Ascending aorta (tissue), 2 donors: ENCODE measurements at regions of chr10 and their contacts with region 1.

Region 1: DNA sequence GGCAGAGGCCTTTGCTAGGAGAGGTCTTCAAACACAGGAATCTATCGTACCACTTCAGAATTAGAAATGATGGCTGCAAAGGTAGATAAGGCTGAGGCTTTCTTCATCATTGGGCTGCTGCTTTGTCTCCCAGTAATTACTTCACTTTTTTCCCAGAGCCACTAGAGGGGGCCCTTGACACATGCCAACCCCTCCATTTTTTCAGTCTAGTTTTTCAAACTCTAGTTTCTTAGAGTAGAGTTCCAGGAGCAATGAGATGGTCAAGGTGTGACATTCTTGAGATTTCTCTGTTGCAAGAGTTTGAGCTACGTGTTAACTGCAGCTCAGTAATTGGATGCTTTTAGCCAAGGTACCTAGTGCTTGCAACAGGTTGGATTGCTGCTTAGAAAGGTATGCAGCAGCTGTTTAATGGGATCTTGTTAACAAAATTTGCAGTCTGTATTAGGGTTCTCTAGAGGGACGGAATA is 33.8 kb upstream of the RBM20 start:
- DNase-seq: no peak
- H3K4me3 ChIP-seq: no peak overlapping the region
- H3K27ac ChIP-seq: peak overlapping the region in 1 of 2 donors; percentile 40
- H3K4me1 ChIP-seq: no peaks in the 10 kb centered on the region
- H3K27me3 ChIP-seq: no peaks in the 10 kb centered on the region
- CTCF ChIP-seq: peak; percentile 65 to 88 (median 76)

Region 2: DNA sequence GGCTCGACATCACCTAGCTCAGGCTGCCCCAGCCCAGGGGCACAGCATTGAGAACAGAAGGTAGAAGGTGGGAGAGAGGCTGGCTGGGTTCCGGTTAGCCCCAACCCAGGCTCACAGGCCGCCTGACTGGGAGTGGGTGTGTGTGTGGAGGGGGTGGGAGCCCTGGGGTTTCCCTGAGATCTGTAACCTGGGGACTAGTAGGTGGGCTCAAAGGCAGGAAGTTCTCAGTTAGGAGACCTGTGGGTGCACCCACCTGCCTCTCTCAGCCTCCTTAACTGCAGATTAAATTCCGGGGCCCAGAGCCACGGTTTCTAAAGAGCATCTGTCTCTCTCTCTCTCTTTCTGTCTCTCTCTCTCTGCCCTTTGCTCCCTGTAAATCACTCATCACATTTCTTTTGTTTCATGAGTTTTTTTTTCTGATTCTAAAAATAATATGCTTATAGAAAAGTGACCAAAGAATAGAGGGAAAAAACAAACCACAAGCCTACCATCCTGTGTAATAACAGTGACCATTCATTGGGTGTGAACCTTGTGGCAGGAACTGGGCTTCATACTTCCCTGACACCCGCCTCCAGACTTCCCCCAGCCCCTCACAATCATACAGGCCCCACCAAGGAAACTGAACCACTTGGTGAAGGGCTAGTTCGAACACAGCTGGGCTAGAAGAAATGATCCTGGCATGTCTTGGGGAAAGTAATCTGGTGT is 222.2 kb before region 1 on chr10:
- intact Hi-C with region 1: no loop called
- DNase-seq: no peak
- H3K4me3 ChIP-seq: no peak overlapping the region
- H3K27ac ChIP-seq: no peak overlapping the region
- H3K4me1 ChIP-seq: no peaks in the 10 kb centered on the region
- H3K27me3 ChIP-seq: no peaks in the 10 kb centered on the region
- CTCF ChIP-seq: no peak

Region 3: DNA sequence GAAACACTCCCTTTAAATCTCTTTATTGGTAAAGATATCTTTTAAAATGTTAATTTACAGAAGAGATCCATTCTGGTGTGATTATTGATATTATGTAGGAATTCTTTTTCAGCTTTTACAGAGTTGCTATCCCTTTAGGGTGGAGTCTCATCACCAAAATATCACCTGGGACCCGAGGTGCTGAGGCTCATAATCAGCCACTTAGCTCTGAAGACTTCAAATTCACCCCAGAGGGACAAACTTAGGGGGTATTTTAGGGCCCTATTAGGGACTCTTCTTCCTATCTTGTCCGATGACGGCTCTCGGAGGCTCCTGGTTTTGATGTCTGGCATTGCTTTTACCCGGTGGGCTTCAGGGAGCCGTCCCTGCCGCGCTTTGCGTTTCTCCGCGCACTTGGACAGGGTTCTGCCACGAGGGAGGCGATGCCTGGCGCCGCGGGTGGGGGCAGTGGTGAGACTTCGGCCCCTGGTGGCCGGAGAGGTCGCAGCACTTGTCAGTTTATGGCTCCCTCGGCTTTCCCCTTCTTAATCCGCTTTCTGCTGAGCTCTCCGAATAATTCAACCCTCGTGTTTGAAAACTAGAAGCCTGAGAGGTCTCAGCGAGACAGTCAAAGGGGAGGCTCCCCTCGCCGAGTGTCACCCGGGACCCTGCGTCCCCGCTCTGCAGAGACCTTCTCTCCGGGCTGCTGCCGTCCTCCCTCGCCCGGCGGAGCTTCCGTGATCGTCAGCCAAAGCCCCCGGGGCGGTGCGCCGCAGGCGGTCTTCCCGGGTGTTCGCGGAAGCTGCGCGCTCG is 61.6 kb after region 1 on chr10:
- intact Hi-C with region 1: loop called (anchors 2 kb)
- DNase-seq: peak; percentile 21 to 84
- H3K4me3 ChIP-seq: peak overlapping the region; percentile 68 to 73
- H3K27ac ChIP-seq: peak overlapping the region; percentile 71 to 80
- H3K4me1 ChIP-seq: peaks cover 0 to 9% of the 10 kb centered on the region in 2 donors
- H3K27me3 ChIP-seq: no peaks in the 10 kb centered on the region
- CTCF ChIP-seq: peak; percentile 83 to 94 (median 87)

Region 4: GRCh38 chr10:110681023-110681681 is 70.8 kb after region 1 on chr10:
- intact Hi-C with region 1: loop called (anchors 2 kb)
- DNase-seq: no peak
- H3K4me3 ChIP-seq: no peak overlapping the region
- H3K27ac ChIP-seq: peak overlapping the region in 1 of 2 donors; percentile 20
- H3K4me1 ChIP-seq: peaks cover 0 to 3% of the 10 kb centered on the region in 2 donors
- H3K27me3 ChIP-seq: no peaks in the 10 kb centered on the region
- CTCF ChIP-seq: peak in 2 of 3 experiments; percentile 48 to 58

Region 5: DNA sequence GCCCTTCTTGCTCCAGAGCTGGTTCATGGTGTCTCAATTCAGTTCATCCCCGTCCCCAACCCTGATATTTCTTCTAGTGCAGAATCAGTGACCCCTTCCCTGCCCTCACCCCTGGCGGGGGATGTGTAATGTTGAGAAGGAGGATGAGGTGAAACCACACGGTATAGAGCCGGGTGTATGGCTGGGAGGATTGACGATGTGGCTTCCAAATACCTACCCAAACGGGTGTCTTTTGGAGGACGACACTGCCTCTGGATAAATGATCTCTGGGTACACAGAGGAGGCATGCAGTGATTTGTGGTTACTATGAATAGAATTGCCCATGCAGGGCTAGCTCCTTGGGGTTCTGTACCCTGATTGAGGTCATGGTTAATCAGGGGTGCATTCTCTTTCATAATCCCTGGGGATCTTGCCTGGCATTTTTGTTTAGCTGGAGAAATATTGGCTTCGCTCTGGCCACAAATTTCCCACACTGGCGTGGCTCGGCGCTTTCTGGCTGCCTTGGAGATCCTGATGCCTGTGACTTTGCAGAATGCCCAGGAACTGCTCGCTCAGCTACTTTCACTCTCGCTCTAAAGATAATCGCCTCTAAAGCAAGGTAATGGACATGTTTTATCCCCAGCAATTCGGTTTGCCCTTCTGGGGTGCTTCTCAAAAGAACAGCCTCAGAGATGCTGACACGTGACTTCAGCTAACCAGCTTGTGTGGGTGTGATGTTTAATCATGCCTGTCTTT is 123.0 kb after region 1 on chr10:
- intact Hi-C with region 1: loop called (anchors 5 kb)
- DNase-seq: peak in 1 of 2 donors; percentile 62
- H3K4me3 ChIP-seq: peak overlapping the region; percentile 51 to 56
- H3K27ac ChIP-seq: peak overlapping the region; percentile 40 to 55
- H3K4me1 ChIP-seq: peaks cover 0 to 9% of the 10 kb centered on the region in 2 donors
- H3K27me3 ChIP-seq: no peaks in the 10 kb centered on the region
- CTCF ChIP-seq: no peak

Region 6: GRCh38 chr10:110893559-110894179 is 283.3 kb after region 1 on chr10:
- intact Hi-C with region 1: loop called (anchors 2 kb)
- DNase-seq: no peak
- H3K4me3 ChIP-seq: no peak overlapping the region
- H3K27ac ChIP-seq: no peak overlapping the region
- H3K4me1 ChIP-seq: no peaks in the 10 kb centered on the region
- H3K27me3 ChIP-seq: no peaks in the 10 kb centered on the region
- CTCF ChIP-seq: peak; percentile 43 to 67 (median 47)